Heart right ventricle (tissue), 16 donors: ENCODE measurements at regions of chrX and their contacts with region 1.

Region 1: GRCh38 chrX:1246816-1247215 is 21.8 kb upstream of the CSF2RA start:
- DNase-seq: peak; percentile 65 to 70
- ATAC-seq: peak in 7 of 8 donors; percentile 42 to 65 (median 49)
- H3K4me3 ChIP-seq: no peak overlapping the region
- H3K27ac ChIP-seq: no peak overlapping the region
- H3K4me1 ChIP-seq: peaks cover 5 to 20% (median 16%) of the 10 kb centered on the region in 9 donors
- H3K27me3 ChIP-seq: peaks cover 0 to 20% (median 0%) of the 10 kb centered on the region in 7 donors
- CTCF ChIP-seq: peak; percentile 72 to 91 (median 87)

Region 2: GRCh38 chrX:1205680-1206611 is 40.9 kb before region 1 on chrX:
- intact Hi-C with region 1: loop called in 1 of 10 experiments (anchors 5 kb)
- DNase-seq: peak in 1 of 2 donors; percentile 37
- ATAC-seq: peak in 7 of 8 donors; percentile 55 to 89 (median 79)
- H3K4me3 ChIP-seq: peak overlapping the region in 9 of 10 donors; percentile 5 to 56 (median 47)
- H3K27ac ChIP-seq: peak overlapping the region in 1 of 10 donors; percentile 56
- H3K4me1 ChIP-seq: peaks cover 0 to 19% (median 12%) of the 10 kb centered on the region in 9 donors
- H3K27me3 ChIP-seq: peaks cover 0 to 6% (median 0%) of the 10 kb centered on the region in 7 donors
- CTCF ChIP-seq: no peak